Naive thymus-derived CD4-positive, alpha-beta T cell (primary cell): ENCODE measurements at regions of chr1 and their contacts with region 1.

Region 1: DNA sequence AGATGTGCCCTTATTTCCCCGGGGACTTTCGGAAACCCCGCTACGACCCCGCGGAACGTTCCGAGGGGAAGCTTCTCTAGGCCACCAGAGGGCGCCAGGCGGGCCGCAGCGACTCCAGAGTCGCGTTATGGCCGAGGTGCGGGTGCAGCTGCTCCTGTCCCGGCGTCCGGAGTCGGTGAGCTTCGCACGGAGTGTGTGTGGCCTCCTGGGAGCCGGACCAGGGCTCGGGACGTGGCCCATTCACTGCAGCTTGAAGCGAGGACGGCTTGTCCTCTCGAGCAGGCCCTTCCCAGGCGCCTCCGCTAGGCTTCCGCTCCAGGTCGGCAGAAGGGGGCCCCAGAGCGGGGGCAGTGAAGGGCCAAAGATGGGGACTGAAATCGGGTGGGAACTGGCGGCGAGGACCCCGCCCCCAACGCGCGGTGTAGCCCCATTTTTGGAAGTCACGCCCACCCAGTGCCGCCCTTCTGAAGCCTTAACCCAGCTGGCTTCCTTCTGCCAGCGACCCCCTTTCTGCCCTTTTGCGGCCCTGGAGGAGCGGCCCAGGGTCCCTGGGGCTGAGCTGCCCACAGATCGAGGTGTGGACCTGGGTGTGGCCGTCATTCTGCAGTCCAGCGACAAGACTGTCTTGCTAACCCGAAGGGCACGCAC is at the start of gene NUDT17:
- DNase-seq: peak; percentile 52 to 78 (median 71)
- ATAC-seq: peak; percentile 89
- H3K4me3 ChIP-seq: peak within 1 kb of the TSS; percentile 86
- H3K4me3 Mint-ChIP-seq: no peak within 1 kb of the TSS
- H3K27ac ChIP-seq: peak within 1 kb of the TSS; percentile 69
- H3K27ac Mint-ChIP-seq: peak within 1 kb of the TSS in 5 of 9 donors; percentile 54 to 93 (median 77)
- H3K4me1 ChIP-seq: peaks cover 10 to 15% of the 10 kb centered on the region in 2 donors
- H3K4me1 Mint-ChIP-seq: peaks cover 6 to 21% (median 14%) of the 10 kb centered on the region in 7 donors
- H3K27me3 ChIP-seq: no peaks in the 10 kb centered on the region
- H3K27me3 Mint-ChIP-seq: no peaks in the 10 kb centered on the region
- total RNA-seq, gene NUDT17: 2.9 to 6.7 (median 3.4) TPM

Region 2: GRCh38 chr1:145601593-145601992 is 244.0 kb before region 1 on chr1:
- CTCF ChIA-PET with region 1: no interaction called
- POLR2A ChIA-PET with region 1: no interaction called
- intact Hi-C with region 1: no loop called
- DNase-seq: no peak
- ATAC-seq: no peak
- H3K4me3 ChIP-seq: no peak overlapping the region
- H3K4me3 Mint-ChIP-seq: no peak overlapping the region
- H3K27ac ChIP-seq: no peak overlapping the region
- H3K27ac Mint-ChIP-seq: no peak overlapping the region
- H3K4me1 ChIP-seq: no peaks in the 10 kb centered on the region
- H3K4me1 Mint-ChIP-seq: peaks cover 0 to 3% (median 0%) of the 10 kb centered on the region in 7 donors
- H3K27me3 ChIP-seq: no peaks in the 10 kb centered on the region
- H3K27me3 Mint-ChIP-seq: peaks cover 4 to 25% (median 9%) of the 10 kb centered on the region in 5 donors

Region 3: GRCh38 chr1:145711213-145711651 is 134.4 kb before region 1 on chr1:
- CTCF ChIA-PET with region 1: no interaction called
- POLR2A ChIA-PET with region 1: no interaction called
- intact Hi-C with region 1: no loop called
- DNase-seq: no peak
- ATAC-seq: no peak
- H3K4me3 ChIP-seq: no peak overlapping the region
- H3K4me3 Mint-ChIP-seq: no peak overlapping the region
- H3K27ac ChIP-seq: no peak overlapping the region
- H3K27ac Mint-ChIP-seq: no peak overlapping the region
- H3K4me1 ChIP-seq: peaks cover 0 to 2% of the 10 kb centered on the region in 2 donors
- H3K4me1 Mint-ChIP-seq: peaks cover 0 to 13% (median 0%) of the 10 kb centered on the region in 7 donors
- H3K27me3 ChIP-seq: no peaks in the 10 kb centered on the region
- H3K27me3 Mint-ChIP-seq: peaks cover 0 to 9% (median 0%) of the 10 kb centered on the region in 5 donors

Region 4: DNA sequence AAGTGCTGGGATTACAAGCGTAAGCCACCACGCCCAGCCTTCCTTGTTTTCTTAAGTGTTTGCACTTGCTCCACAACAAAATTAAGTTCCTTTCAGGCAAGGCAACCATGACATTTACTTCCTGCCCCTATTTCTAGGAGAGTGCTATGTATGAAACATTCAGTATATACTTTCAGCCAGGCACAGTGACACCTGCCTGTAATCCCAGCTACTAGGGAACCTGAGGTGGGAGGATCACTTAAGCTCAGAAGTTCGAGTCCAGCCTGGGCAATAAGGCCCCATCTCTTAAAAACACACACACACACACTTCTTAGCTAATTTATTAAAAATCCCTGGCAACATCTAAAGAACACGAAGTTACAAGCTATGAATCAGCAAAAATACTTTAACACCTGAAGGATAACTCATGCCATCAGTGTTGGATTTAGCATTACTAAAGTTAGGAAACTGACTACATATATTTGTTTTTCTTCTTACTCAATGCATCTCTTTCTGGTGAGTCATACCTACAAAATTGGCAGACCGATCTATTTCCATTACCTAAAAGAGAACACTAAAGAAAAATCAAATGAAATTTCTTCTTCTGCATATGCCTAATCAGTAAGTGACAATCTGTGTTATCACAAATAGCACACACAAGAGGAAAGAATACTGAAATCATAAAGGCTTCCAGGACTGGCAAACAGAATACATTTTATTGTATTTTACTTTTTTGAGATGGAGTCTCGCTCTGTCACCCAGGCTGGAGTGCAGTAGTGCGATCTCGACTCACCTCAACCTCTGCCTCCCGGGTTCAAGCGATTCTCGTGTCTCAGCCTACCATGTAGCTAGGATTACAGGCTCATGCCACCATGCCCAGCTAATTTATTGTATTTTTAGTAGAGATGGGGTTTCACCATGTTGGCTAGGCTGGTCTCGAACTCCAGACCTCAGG is 63.2 kb before region 1 on chr1:
- CTCF ChIA-PET with region 1: no interaction called
- POLR2A ChIA-PET with region 1: no interaction called
- intact Hi-C with region 1: no loop called
- DNase-seq: no peak
- ATAC-seq: no peak
- H3K4me3 ChIP-seq: no peak overlapping the region
- H3K4me3 Mint-ChIP-seq: no peak overlapping the region
- H3K27ac ChIP-seq: no peak overlapping the region
- H3K27ac Mint-ChIP-seq: no peak overlapping the region
- H3K4me1 ChIP-seq: peaks cover 0 to 5% of the 10 kb centered on the region in 2 donors
- H3K4me1 Mint-ChIP-seq: peaks cover 14 to 27% (median 24%) of the 10 kb centered on the region in 7 donors
- H3K27me3 ChIP-seq: no peaks in the 10 kb centered on the region
- H3K27me3 Mint-ChIP-seq: no peaks in the 10 kb centered on the region

Region 5: DNA sequence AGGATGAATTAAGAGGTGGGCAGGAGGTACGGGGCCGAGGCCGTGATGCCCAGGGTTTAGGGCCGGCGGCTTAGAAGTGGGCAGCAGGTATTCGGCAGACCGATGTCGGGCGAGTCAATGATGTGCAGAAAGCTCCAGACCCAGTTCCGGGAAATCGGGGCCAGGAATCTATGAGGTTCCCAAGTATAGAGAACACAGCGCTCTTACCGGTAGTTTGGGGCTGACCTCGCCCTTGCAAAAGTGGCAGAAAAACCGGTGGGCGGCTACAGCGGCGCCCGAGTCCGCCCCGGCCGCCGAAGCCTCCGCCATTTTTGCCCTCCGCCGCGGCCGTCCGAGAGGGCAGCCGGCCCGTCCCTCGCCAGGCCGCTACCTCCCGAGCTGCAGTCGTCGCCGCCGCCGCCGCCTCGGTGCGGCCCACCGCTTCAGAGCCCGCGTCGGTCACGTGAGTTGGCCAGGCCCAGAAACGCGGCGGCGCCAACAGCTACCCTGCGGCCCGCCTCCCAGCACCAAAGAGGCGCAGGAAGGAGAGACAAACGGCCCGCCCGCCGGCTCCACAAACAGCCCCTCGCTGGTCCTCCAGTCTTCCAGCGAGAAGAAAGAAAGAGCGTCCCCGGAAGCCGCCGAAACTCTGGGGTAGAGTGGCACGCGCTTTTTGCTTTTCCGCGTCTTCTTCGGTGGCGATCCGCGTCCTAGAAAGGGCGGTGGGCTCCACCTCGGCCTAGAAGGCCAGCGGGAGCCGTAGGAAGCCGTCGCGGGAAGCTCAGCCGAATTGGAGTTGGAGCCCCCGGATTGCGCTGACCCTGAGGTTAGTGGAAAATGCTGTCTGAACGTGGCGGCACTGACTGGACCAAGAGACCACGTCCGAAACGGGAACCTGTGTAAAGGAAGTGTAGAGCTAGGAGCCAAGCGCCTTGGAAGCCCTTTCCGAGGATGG is 21.8 kb before region 1 on chr1 and contains the starts of genes POLR3C and RNF115:
- CTCF ChIA-PET with region 1: interaction called, 21 read pairs
- POLR2A ChIA-PET with region 1: interaction called, 10 read pairs
- intact Hi-C with region 1: loop called in 1 of 2 experiments (anchors 2 kb)
- DNase-seq: peak; percentile 63 to 88 (median 82)
- ATAC-seq: peak; percentile 95
- H3K4me3 ChIP-seq: peak within 1 kb of the TSS; percentile 99
- H3K4me3 Mint-ChIP-seq: peak within 1 kb of the TSS; percentile 91 to 100 (median 98)
- H3K27ac ChIP-seq: peak within 1 kb of the TSS; percentile 82
- H3K27ac Mint-ChIP-seq: peak within 1 kb of the TSS; percentile 91 to 98 (median 96)
- H3K4me1 ChIP-seq: peaks cover 10 to 14% of the 10 kb centered on the region in 2 donors
- H3K4me1 Mint-ChIP-seq: peaks cover 19 to 43% (median 35%) of the 10 kb centered on the region in 7 donors
- H3K27me3 ChIP-seq: no peaks in the 10 kb centered on the region
- H3K27me3 Mint-ChIP-seq: no peaks in the 10 kb centered on the region
- total RNA-seq, gene POLR3C: 22.0 to 44.4 (median 32.5) TPM
- total RNA-seq, gene RNF115: 11.4 to 17.3 (median 15.6) TPM

Region 6: GRCh38 chr1:145879775-145880174 is 34.1 kb after region 1 on chr1:
- CTCF ChIA-PET with region 1: interaction called, 19 read pairs
- POLR2A ChIA-PET with region 1: no interaction called
- intact Hi-C with region 1: no loop called
- DNase-seq: no peak
- ATAC-seq: no peak
- H3K4me3 ChIP-seq: no peak overlapping the region
- H3K4me3 Mint-ChIP-seq: no peak overlapping the region
- H3K27ac ChIP-seq: no peak overlapping the region
- H3K27ac Mint-ChIP-seq: no peak overlapping the region
- H3K4me1 ChIP-seq: no peaks in the 10 kb centered on the region
- H3K4me1 Mint-ChIP-seq: peaks cover under 1 to 8% (median 3%) of the 10 kb centered on the region in 7 donors
- H3K27me3 ChIP-seq: no peaks in the 10 kb centered on the region
- H3K27me3 Mint-ChIP-seq: peaks cover 6 to 62% (median 17%) of the 10 kb centered on the region in 5 donors

Region 7: DNA sequence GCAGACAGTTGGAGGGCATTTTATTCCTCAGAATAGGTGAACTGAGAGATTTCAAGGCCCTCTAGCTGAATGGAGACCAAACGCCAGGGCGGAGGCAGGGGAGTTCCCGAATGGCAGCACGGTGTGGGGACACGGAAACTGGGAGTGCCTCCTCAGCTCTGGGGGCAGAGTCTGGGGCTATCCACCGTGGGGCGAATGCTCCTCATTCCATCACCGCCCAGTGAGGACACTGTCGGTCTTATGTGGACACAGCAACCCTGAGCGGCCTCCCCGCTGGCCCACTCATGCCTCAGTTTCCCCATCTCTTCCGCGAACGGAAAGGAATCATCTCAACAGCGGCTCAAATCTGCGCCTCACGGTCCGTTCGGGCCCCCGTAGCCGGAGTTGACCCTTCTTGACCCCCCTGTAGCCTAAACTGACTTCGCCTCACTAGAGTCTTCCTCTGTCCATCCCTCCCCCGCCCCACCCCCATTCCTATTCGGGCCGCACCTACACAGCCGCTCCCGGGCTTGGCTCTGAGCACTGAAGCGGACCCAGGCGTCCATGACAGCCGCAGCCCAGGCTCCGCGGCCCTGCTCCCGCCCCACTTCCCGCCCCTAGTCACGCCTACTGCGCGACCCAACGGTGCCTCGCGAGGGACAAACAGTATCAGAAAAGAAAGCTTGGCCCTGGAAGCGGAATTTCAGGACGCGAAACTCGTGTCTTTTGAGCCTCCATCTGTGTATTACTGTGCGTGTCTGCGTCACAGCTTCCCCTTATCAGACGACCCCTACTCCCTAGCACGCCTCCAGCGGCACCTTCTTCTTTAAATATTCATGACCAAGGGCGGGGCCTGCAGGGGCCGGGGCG is 72.7 kb after region 1 on chr1 and contains the start of gene PEX11B:
- CTCF ChIA-PET with region 1: interaction called, 11 read pairs
- POLR2A ChIA-PET with region 1: interaction called, 3 read pairs
- intact Hi-C with region 1: loop called in 1 of 2 experiments (anchors 2 kb)
- DNase-seq: peak; percentile 80 to 95 (median 93)
- ATAC-seq: peak; percentile 94
- H3K4me3 ChIP-seq: peak within 1 kb of the TSS; percentile 82
- H3K4me3 Mint-ChIP-seq: peak within 1 kb of the TSS; percentile 92 to 98 (median 96)
- H3K27ac ChIP-seq: peak within 1 kb of the TSS; percentile 83
- H3K27ac Mint-ChIP-seq: peak within 1 kb of the TSS; percentile 93 to 98 (median 96)
- H3K4me1 ChIP-seq: peaks cover 21 to 23% of the 10 kb centered on the region in 2 donors
- H3K4me1 Mint-ChIP-seq: peaks cover 27 to 75% (median 61%) of the 10 kb centered on the region in 7 donors
- H3K27me3 ChIP-seq: no peaks in the 10 kb centered on the region
- H3K27me3 Mint-ChIP-seq: no peaks in the 10 kb centered on the region
- total RNA-seq, gene PEX11B: 16.4 to 40.4 (median 37.7) TPM

Region 8: GRCh38 chr1:145978854-145979759 is 133.5 kb after region 1 on chr1:
- CTCF ChIA-PET with region 1: interaction called, 19 read pairs
- POLR2A ChIA-PET with region 1: interaction called, 12 read pairs
- intact Hi-C with region 1: loop called in 1 of 2 experiments (anchors 1 kb)
- DNase-seq: peak; percentile 31 to 87 (median 71)
- ATAC-seq: peak; percentile 89
- H3K4me3 ChIP-seq: peak overlapping the region; percentile 64
- H3K4me3 Mint-ChIP-seq: no peak overlapping the region
- H3K27ac ChIP-seq: peak overlapping the region; percentile 82
- H3K27ac Mint-ChIP-seq: no peak overlapping the region
- H3K4me1 ChIP-seq: peaks cover 67 to 68% of the 10 kb centered on the region in 2 donors
- H3K4me1 Mint-ChIP-seq: peaks cover 12 to 37% (median 16%) of the 10 kb centered on the region in 7 donors
- H3K27me3 ChIP-seq: no peaks in the 10 kb centered on the region
- H3K27me3 Mint-ChIP-seq: no peaks in the 10 kb centered on the region

Region 9: GRCh38 chr1:146019231-146020057 is 173.8 kb after region 1 on chr1:
- CTCF ChIA-PET with region 1: interaction called, 44 read pairs
- POLR2A ChIA-PET with region 1: interaction called, 3 read pairs
- intact Hi-C with region 1: no loop called
- DNase-seq: no peak
- ATAC-seq: peak; percentile 31
- H3K4me3 ChIP-seq: no peak overlapping the region
- H3K4me3 Mint-ChIP-seq: peak overlapping the region in 9 of 10 donors; percentile 5 to 63 (median 49)
- H3K27ac ChIP-seq: no peak overlapping the region
- H3K27ac Mint-ChIP-seq: peak overlapping the region in 2 of 9 donors; percentile 13 to 50
- H3K4me1 ChIP-seq: peaks cover 4 to 7% of the 10 kb centered on the region in 2 donors
- H3K4me1 Mint-ChIP-seq: peaks cover 0 to 13% (median 10%) of the 10 kb centered on the region in 7 donors
- H3K27me3 ChIP-seq: peaks cover 10 to 15% of the 10 kb centered on the region in 2 donors
- H3K27me3 Mint-ChIP-seq: peaks cover 38 to 80% (median 56%) of the 10 kb centered on the region in 5 donors